ENCODE measurements at regions of chr6 and their contacts with region 1.

Region 1: GRCh38 chr6:26216356-26216885 is 129.2 kb downstream of the HFE start:
- DNase-seq: peak; percentile 100
- ATAC-seq: peak; percentile 77
- H3K4me3 ChIP-seq: peak overlapping the region; percentile 75
- H3K27ac ChIP-seq: peak overlapping the region; percentile 93
- H3K4me1 ChIP-seq: peaks cover 12% of the 10 kb centered on the region
- H3K27me3 ChIP-seq: no peaks in the 10 kb centered on the region
- CTCF ChIP-seq: no peak
- EP300 ChIP-seq: no peak
- POLR2A ChIP-seq: peak; percentile 84
- RAD21 ChIP-seq: 0 out of 2 replicates have a peak, but pooled peaks have one; percentile 3

Region 2: DNA sequence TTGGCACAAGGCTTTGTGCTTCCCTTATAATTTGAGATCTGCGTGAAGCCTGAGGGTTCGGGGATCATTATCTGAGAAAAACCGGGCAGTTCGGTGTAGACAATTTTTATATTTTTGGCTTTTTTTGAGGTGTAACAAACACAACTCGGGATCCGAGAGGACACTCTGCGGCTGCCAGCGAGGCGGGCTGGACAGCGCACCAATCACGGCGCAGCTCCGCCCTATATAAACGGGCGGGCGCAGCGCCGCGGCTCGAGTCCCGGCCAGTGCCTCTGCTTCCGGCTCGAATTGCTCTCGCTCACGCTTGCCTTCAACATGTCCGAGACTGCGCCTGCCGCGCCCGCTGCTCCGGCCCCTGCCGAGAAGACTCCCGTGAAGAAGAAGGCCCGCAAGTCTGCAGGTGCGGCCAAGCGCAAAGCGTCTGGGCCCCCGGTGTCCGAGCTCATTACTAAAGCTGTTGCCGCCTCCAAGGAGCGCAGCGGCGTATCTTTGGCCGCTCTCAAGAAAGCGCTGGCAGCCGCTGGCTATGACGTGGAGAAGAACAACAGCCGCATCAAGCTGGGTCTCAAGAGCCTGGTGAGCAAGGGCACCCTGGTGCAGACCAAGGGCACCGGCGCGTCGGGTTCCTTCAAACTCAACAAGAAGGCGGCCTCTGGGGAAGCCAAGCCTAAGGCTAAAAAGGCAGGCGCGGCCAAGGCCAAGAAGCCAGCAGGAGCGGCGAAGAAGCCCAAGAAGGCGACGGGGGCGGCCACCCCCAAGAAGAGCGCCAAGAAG is 60.2 kb before region 1 on chr6:
- CTCF ChIA-PET with region 1: no interaction called
- POLR2A ChIA-PET with region 1: interaction called, 12 read pairs
- RAD21 ChIA-PET with region 1: interaction called, 11 read pairs
- SMC1A ChIA-PET with region 1: interaction called, 3 read pairs
- in situ Hi-C with region 1: no loop called
- intact Hi-C with region 1: no loop called
- DNase-seq: peak; percentile 90
- ATAC-seq: peak; percentile 65
- H3K4me3 ChIP-seq: peak overlapping the region; percentile 88
- H3K27ac ChIP-seq: peak overlapping the region; percentile 94
- H3K4me1 ChIP-seq: peaks cover 11% of the 10 kb centered on the region
- H3K27me3 ChIP-seq: no peaks in the 10 kb centered on the region
- CTCF ChIP-seq: no peak
- EP300 ChIP-seq: no peak; a peak in 1 of 4 replicates
- POLR2A ChIP-seq: peak; percentile 93
- RAD21 ChIP-seq: no peak

Region 3: GRCh38 chr6:26183581-26184366 is 32.6 kb before region 1 on chr6:
- CTCF ChIA-PET with region 1: interaction called, 3 read pairs
- POLR2A ChIA-PET with region 1: interaction called, 20 read pairs
- RAD21 ChIA-PET with region 1: interaction called, 16 read pairs
- SMC1A ChIA-PET with region 1: interaction called, 4 read pairs
- in situ Hi-C with region 1: no loop called
- intact Hi-C with region 1: no loop called
- DNase-seq: peak; percentile 84
- ATAC-seq: peak; percentile 71
- H3K4me3 ChIP-seq: peak overlapping the region; percentile 59
- H3K27ac ChIP-seq: peak overlapping the region; percentile 78
- H3K4me1 ChIP-seq: peaks cover 23% of the 10 kb centered on the region
- H3K27me3 ChIP-seq: no peaks in the 10 kb centered on the region
- CTCF ChIP-seq: no peak
- EP300 ChIP-seq: no peak
- POLR2A ChIP-seq: peak; percentile 85
- RAD21 ChIP-seq: no peak

Region 4: DNA sequence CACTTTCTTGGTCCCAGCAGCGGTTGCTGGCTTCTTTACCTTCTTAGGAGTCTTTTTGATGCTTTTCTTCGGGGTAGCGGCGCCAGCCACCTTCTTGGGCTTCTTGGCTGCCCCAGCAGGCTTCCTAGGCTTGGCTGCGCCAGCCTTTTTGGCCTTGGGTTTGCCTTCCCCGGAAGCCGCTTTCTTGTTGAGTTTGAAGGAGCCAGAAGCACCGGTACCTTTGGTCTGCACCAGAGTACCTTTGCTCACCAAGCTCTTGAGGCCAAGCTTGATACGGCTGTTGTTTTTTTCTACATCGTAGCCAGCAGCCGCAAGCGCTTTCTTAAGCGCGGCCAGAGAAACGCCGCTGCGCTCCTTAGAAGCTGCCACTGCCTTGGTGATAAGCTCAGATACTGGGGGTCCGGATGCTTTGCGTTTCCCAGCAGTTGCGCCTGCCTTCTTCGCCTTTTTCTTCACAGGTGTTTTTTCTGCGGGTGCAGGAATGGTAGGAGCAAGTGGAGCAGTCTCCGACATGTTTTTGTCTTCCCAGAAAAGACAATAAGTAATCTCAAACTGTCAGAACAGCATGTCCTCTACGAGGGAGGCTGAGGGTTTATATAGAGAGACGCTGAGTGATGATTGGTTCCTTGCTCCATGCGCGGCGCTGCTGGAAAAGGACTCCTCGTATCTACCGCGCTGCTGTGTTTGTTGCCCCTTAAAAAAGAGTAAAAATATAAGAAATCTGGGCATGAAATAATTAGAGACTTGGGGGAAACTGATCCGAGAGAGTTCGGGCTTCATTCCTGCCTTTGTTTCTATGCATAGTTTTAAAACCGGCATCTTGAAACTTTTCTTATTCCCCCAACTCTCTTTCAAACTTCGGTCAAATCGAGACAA is 18.2 kb after region 1 on chr6:
- CTCF ChIA-PET with region 1: no interaction called
- POLR2A ChIA-PET with region 1: interaction called, 56 read pairs
- RAD21 ChIA-PET with region 1: interaction called, 13 read pairs
- SMC1A ChIA-PET with region 1: interaction called, 28 read pairs
- in situ Hi-C with region 1: no loop called
- intact Hi-C with region 1: loop called (anchors 2 kb)
- DNase-seq: peak; percentile 96
- ATAC-seq: peak; percentile 62
- H3K4me3 ChIP-seq: peak overlapping the region; percentile 83
- H3K27ac ChIP-seq: peak overlapping the region; percentile 95
- H3K4me1 ChIP-seq: peaks cover 2% of the 10 kb centered on the region
- H3K27me3 ChIP-seq: no peaks in the 10 kb centered on the region
- CTCF ChIP-seq: no peak; a peak in 1 of 6 replicates
- EP300 ChIP-seq: peak in 1 of 2 experiments; percentile 64; a peak in 2 of 4 replicates
- POLR2A ChIP-seq: peak; percentile 92
- RAD21 ChIP-seq: 0 out of 2 replicates have a peak, but pooled peaks have one; percentile 13

Region 5: GRCh38 chr6:26285143-26286134 is 69.0 kb after region 1 on chr6:
- CTCF ChIA-PET with region 1: no interaction called
- POLR2A ChIA-PET with region 1: interaction called, 7 read pairs
- RAD21 ChIA-PET with region 1: interaction called, 6 read pairs
- SMC1A ChIA-PET with region 1: interaction called, 6 read pairs
- in situ Hi-C with region 1: no loop called
- intact Hi-C with region 1: loop called (anchors 2 kb)
- DNase-seq: peak; percentile 100
- ATAC-seq: peak; percentile 84
- H3K4me3 ChIP-seq: peak overlapping the region; percentile 75
- H3K27ac ChIP-seq: peak overlapping the region; percentile 97
- H3K4me1 ChIP-seq: no peaks in the 10 kb centered on the region; the same call in 1 of the 2 replicates
- H3K27me3 ChIP-seq: no peaks in the 10 kb centered on the region
- CTCF ChIP-seq: no peak
- EP300 ChIP-seq: peak in 1 of 2 experiments; percentile 72; a peak in 3 of 4 replicates
- POLR2A ChIP-seq: peak; percentile 95
- RAD21 ChIP-seq: no peak

Region 6: DNA sequence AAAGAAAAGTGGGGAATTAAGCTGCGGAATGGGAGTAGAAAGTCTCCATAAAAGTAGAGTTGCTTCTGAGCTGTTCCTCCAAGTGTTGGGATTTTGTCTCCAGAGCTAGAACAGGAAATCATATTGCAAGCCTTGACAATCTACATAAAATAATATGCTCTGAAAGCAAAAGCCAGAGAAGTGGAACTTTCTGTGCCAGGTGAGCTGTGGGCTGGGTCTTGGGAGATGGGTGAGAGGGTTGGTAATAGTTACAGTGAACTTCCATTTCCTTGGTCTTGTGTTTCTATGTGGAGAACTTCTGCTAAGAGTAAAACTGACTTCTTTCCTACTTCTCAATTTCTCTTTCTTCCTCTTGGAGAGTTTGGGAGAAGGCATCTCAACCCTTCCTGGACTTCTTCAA is 315.5 kb after region 1 on chr6:
- CTCF ChIA-PET with region 1: no interaction called
- POLR2A ChIA-PET with region 1: no interaction called
- RAD21 ChIA-PET with region 1: no interaction called
- SMC1A ChIA-PET with region 1: no interaction called
- in situ Hi-C with region 1: no loop called
- intact Hi-C with region 1: no loop called
- DNase-seq: no peak
- ATAC-seq: no peak
- H3K4me3 ChIP-seq: no peak overlapping the region
- H3K27ac ChIP-seq: no peak overlapping the region
- H3K4me1 ChIP-seq: peaks cover 17% of the 10 kb centered on the region
- H3K27me3 ChIP-seq: no peaks in the 10 kb centered on the region
- CTCF ChIP-seq: no peak
- EP300 ChIP-seq: no peak
- POLR2A ChIP-seq: no peak
- RAD21 ChIP-seq: no peak

Measured in GM12878 (cell line).